ENCODE measurements at regions of chr1 and their contacts with region 1.

Region 1: GRCh38 chr1:211323156-211324063 is 3.2 kb upstream of the TRAF5 start:
- DNase-seq: peak in 1 of 2 experiments; percentile 59
- H3K4me3 ChIP-seq: no peak overlapping the region
- H3K27ac ChIP-seq: no peak overlapping the region
- H3K4me1 ChIP-seq: peaks cover 2 to 15% (median 7%) of the 10 kb centered on the region in 4 experiments; a peak in 6 of 7 replicates
- H3K27me3 ChIP-seq: peaks cover 0 to 7% (median 4%) of the 10 kb centered on the region in 4 experiments; a peak in 4 of 7 replicates
- CTCF ChIP-seq: peak; percentile 66 to 95 (median 91)
- EP300 ChIP-seq: no peak
- POLR2A ChIP-seq: no peak
- RAD21 ChIP-seq: peak; percentile 95

Region 2: GRCh38 chr1:211267204-211267857 is 56.1 kb before region 1 on chr1:
- CTCF ChIA-PET with region 1: no interaction called
- POLR2A ChIA-PET with region 1: no interaction called
- DNase-seq: no peak
- H3K4me3 ChIP-seq: no peak overlapping the region
- H3K27ac ChIP-seq: no peak overlapping the region
- H3K4me1 ChIP-seq: no peaks in the 10 kb centered on the region
- H3K27me3 ChIP-seq: no peaks in the 10 kb centered on the region
- CTCF ChIP-seq: no peak
- EP300 ChIP-seq: no peak
- POLR2A ChIP-seq: no peak
- RAD21 ChIP-seq: no peak

Region 3: GRCh38 chr1:211335522-211336157 is 12.2 kb after region 1 on chr1:
- CTCF ChIA-PET with region 1: interaction called, 19 read pairs
- POLR2A ChIA-PET with region 1: interaction called, 6 read pairs
- DNase-seq: no peak
- H3K4me3 ChIP-seq: no peak overlapping the region
- H3K27ac ChIP-seq: no peak overlapping the region
- H3K4me1 ChIP-seq: peaks cover 4 to 10% (median 7%) of the 10 kb centered on the region in 4 experiments
- H3K27me3 ChIP-seq: no peaks in the 10 kb centered on the region
- CTCF ChIP-seq: no peak
- EP300 ChIP-seq: no peak
- POLR2A ChIP-seq: no peak
- RAD21 ChIP-seq: no peak

Region 4: DNA sequence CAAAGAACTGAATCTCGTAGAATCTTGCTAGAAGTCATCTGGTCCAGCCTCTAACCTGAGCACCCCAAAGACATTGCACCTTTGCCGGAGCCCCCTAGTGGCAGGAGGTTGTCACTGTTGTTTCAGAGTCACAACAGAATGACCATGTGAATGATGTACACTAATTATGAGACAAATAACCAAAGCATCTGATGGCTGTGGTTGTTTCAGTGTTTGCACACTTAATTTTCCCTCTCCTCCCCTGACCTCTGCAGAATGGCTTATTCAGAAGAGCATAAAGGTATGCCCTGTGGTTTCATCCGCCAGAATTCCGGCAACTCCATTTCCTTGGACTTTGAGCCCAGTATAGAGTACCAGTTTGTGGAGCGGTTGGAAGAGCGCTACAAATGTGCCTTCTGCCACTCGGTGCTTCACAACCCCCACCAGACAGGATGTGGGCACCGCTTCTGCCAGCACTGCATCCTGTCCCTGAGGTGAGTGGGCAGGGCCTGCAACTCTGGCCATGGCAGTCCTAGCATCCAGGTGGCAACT is 29.6 kb after region 1 on chr1:
- CTCF ChIA-PET with region 1: interaction called, 17 read pairs
- POLR2A ChIA-PET with region 1: no interaction called
- DNase-seq: peak in 1 of 2 experiments; percentile 79
- H3K4me3 ChIP-seq: no peak overlapping the region
- H3K27ac ChIP-seq: no peak overlapping the region
- H3K4me1 ChIP-seq: no peaks in the 10 kb centered on the region
- H3K27me3 ChIP-seq: no peaks in the 10 kb centered on the region
- CTCF ChIP-seq: peak; percentile 70 to 90 (median 72)
- EP300 ChIP-seq: no peak
- POLR2A ChIP-seq: no peak
- RAD21 ChIP-seq: peak; percentile 59 to 68

Region 5: GRCh38 chr1:211469938-211470529 is 146.6 kb after region 1 on chr1:
- CTCF ChIA-PET with region 1: interaction called, 12 read pairs
- POLR2A ChIA-PET with region 1: interaction called, 3 read pairs
- DNase-seq: peak; percentile 81 to 92
- H3K4me3 ChIP-seq: no peak overlapping the region
- H3K27ac ChIP-seq: no peak overlapping the region
- H3K4me1 ChIP-seq: peaks cover 0 to 5% (median 2%) of the 10 kb centered on the region in 4 experiments; a peak in 4 of 7 replicates
- H3K27me3 ChIP-seq: no peaks in the 10 kb centered on the region
- CTCF ChIP-seq: peak; percentile 79 to 87 (median 81)
- EP300 ChIP-seq: no peak; a peak in 1 of 3 replicates
- POLR2A ChIP-seq: no peak
- RAD21 ChIP-seq: peak; percentile 49 to 71

Region 6: GRCh38 chr1:211527006-211527405 is 203.6 kb after region 1 on chr1:
- CTCF ChIA-PET with region 1: interaction called, 13 read pairs
- POLR2A ChIA-PET with region 1: no interaction called
- DNase-seq: no peak
- H3K4me3 ChIP-seq: no peak overlapping the region
- H3K27ac ChIP-seq: no peak overlapping the region
- H3K4me1 ChIP-seq: no peaks in the 10 kb centered on the region; a peak in 1 of 7 replicates
- H3K27me3 ChIP-seq: no peaks in the 10 kb centered on the region; a peak in 1 of 7 replicates
- CTCF ChIP-seq: no peak
- EP300 ChIP-seq: no peak
- POLR2A ChIP-seq: no peak
- RAD21 ChIP-seq: no peak

Region 7: DNA sequence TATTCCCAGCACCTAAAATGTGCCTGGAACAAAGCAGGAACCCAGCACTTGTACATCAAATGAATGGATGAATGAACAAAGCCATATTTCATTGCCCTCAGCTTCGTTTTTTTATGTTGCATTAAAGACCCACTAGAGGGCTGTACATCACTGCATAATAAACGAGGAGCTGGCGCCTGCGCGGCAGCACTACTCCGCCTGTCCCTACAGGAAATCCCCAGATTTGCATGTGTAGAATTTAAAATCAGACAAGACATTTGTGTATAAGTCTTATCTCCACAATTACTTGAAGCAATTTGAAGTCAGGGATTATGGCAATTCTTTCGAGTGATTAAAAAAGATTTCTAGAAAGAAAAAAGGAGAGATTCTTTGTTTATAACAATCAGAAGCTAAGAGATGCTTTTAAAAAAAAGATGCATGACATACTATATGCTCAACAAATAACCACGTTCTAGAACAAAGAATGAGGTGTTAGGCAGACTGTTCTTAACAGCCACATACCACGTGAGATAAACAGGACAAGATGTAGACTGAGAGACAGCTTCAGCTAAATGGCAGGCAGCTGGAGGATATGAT is 357.4 kb after region 1 on chr1:
- CTCF ChIA-PET with region 1: no interaction called
- POLR2A ChIA-PET with region 1: no interaction called
- DNase-seq: no peak
- H3K4me3 ChIP-seq: no peak overlapping the region
- H3K27ac ChIP-seq: no peak overlapping the region
- H3K4me1 ChIP-seq: peaks cover 0 to 3% (median 0%) of the 10 kb centered on the region in 4 experiments; a peak in 1 of 7 replicates
- H3K27me3 ChIP-seq: no peaks in the 10 kb centered on the region
- CTCF ChIP-seq: peak; percentile 38 to 85 (median 55)
- EP300 ChIP-seq: no peak
- POLR2A ChIP-seq: no peak
- RAD21 ChIP-seq: peak; percentile 83 to 84

Measured in H1 (cell line).